K562 (cell line): ENCODE measurements at regions of chr16 and their contacts with region 1.

Region 1: GRCh38 chr16:49921791-49922456 is 66.0 kb upstream of the ZNF423 start:
- DNase-seq: peak; percentile 57 to 69 (median 63)
- ATAC-seq: peak; percentile 87
- H3K4me3 ChIP-seq: no peak overlapping the region
- H3K27ac ChIP-seq: no peak overlapping the region
- H3K4me1 ChIP-seq: no peaks in the 10 kb centered on the region; a peak in 1 of 5 replicates
- H3K27me3 ChIP-seq: peaks cover 2 to 26% of the 10 kb centered on the region in 2 experiments; a peak in 3 of 5 replicates
- CTCF ChIP-seq: peak; percentile 71 to 77 (median 77)
- EP300 ChIP-seq: no peak
- POLR2A ChIP-seq: no peak
- RAD21 ChIP-seq: peak; percentile 57 to 83

Region 2: DNA sequence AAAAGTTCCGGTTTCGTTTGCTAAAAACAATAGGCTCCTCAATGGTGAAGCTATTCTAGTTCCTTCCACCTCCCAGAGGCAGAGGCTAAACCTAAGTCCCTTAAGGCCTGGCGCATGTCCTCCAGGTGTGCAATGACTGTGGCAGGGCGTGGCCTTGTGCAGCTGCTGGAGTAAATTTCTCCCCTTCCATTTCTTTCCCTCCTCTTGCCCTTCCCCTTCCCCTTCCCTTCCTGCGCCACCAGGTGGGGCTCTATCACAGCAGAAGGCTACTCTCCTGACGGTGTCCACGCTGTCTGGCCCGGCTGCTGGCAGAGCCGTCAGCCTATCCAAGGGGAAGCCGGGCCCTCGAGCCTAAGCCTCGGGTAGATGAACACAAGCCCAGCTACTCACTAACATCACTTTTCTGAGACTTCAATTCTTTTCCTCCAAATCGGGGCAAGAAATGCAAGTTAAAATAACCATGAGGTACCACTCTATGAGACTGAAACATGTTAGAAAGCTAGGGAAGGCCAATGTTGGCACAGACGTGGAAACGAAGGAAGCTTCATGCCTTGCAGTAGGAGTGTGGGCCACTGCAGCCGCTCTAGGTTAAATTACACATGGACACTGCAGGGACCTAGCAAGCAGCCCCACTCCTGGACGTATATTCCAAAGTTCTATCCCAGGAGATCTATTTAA is 513.9 kb before region 1 on chr16:
- CTCF ChIA-PET with region 1: interaction called, 6 read pairs
- POLR2A ChIA-PET with region 1: no interaction called
- in situ Hi-C with region 1: no loop called
- intact Hi-C with region 1: loop called (anchors 5 kb)
- DNase-seq: peak; percentile 65 to 76 (median 74)
- ATAC-seq: peak; percentile 99
- H3K4me3 ChIP-seq: no peak overlapping the region
- H3K27ac ChIP-seq: no peak overlapping the region
- H3K4me1 ChIP-seq: no peaks in the 10 kb centered on the region
- H3K27me3 ChIP-seq: no peaks in the 10 kb centered on the region; a peak in 1 of 5 replicates
- CTCF ChIP-seq: peak; percentile 79 to 82 (median 81)
- EP300 ChIP-seq: no peak
- POLR2A ChIP-seq: no peak
- RAD21 ChIP-seq: peak; percentile 64 to 84

Region 3: GRCh38 chr16:49857423-49858181 is 64.3 kb before region 1 on chr16:
- CTCF ChIA-PET with region 1: no interaction called
- POLR2A ChIA-PET with region 1: interaction called, 4 read pairs
- in situ Hi-C with region 1: no loop called
- intact Hi-C with region 1: loop called (anchors 2 kb)
- DNase-seq: peak; percentile 74 to 86 (median 84)
- ATAC-seq: peak; percentile 78
- H3K4me3 ChIP-seq: peak overlapping the region; percentile 28
- H3K27ac ChIP-seq: no peak overlapping the region
- H3K4me1 ChIP-seq: peaks cover 4 to 48% of the 10 kb centered on the region in 2 experiments; a peak in 3 of 5 replicates
- H3K27me3 ChIP-seq: peaks cover 31 to 57% of the 10 kb centered on the region in 2 experiments
- CTCF ChIP-seq: peak; percentile 75 to 95 (median 88)
- EP300 ChIP-seq: no peak
- POLR2A ChIP-seq: no peak
- RAD21 ChIP-seq: peak; percentile 40 to 66

Region 4: DNA sequence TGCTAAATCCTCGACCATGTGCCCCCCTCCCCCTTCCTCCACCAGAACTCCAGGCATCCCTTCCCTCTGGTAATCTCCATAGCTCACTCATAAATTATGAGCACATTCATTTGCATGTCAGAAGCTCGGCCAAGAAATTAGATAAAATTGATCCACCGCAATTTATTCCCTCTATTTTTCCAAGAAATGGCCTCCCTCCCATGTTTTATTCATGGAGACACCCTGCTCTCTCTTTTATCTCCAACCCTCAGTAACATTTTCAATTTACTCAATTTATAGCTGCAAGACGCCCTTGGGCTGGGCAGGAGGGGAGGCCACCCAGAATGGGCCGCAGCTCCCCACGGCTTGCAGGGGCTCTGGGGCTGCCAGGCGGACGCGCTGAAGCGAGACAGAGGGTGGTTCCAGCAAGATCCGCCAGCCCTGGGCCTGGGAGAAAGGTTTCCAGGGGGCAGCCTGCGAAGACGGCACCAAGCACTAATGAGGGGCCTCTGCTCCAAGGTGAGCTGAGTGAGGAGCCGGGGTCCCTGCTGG is 11.3 kb before region 1 on chr16:
- CTCF ChIA-PET with region 1: no interaction called
- POLR2A ChIA-PET with region 1: no interaction called
- in situ Hi-C with region 1: no loop called
- intact Hi-C with region 1: no loop called
- DNase-seq: no peak
- ATAC-seq: no peak
- H3K4me3 ChIP-seq: no peak overlapping the region
- H3K27ac ChIP-seq: no peak overlapping the region
- H3K4me1 ChIP-seq: peaks cover 0 to 2% of the 10 kb centered on the region in 2 experiments; a peak in 3 of 5 replicates
- H3K27me3 ChIP-seq: peaks cover 0 to 30% of the 10 kb centered on the region in 2 experiments; a peak in 2 of 5 replicates
- CTCF ChIP-seq: no peak
- EP300 ChIP-seq: no peak
- POLR2A ChIP-seq: no peak
- RAD21 ChIP-seq: no peak